CD8-positive, alpha-beta T cell (primary cell): ENCODE measurements at regions of chr1 and their contacts with region 1.

Region 1: GRCh38 chr1:42931108-42931539 is 27.5 kb downstream of the SLC2A1 start:
- DNase-seq: peak in 7 of 9 experiments; percentile 46 to 89 (median 67)
- ATAC-seq: peak; percentile 49
- H3K4me3 ChIP-seq: peak overlapping the region; percentile 22 to 43
- H3K4me3 Mint-ChIP-seq: peak overlapping the region; percentile 70
- H3K27ac ChIP-seq: peak overlapping the region; percentile 63 to 90
- H3K27ac Mint-ChIP-seq: peak overlapping the region; percentile 95
- H3K4me1 ChIP-seq: peaks cover 67% of the 10 kb centered on the region
- H3K4me1 Mint-ChIP-seq: peaks cover 67% of the 10 kb centered on the region
- H3K27me3 ChIP-seq: no peaks in the 10 kb centered on the region
- H3K27me3 Mint-ChIP-seq: no peaks in the 10 kb centered on the region
- CTCF ChIP-seq: peak; percentile 57

Region 2: GRCh38 chr1:42941640-42942330 is 10.7 kb after region 1 on chr1:
- CTCF ChIA-PET with region 1: interaction called, 6 read pairs
- POLR2A ChIA-PET with region 1: interaction called, 15 read pairs
- intact Hi-C with region 1: no loop called
- DNase-seq: no peak
- ATAC-seq: no peak
- H3K4me3 ChIP-seq: no peak overlapping the region
- H3K4me3 Mint-ChIP-seq: no peak overlapping the region
- H3K27ac ChIP-seq: peak overlapping the region in 1 of 2 experiments; percentile 69
- H3K27ac Mint-ChIP-seq: peak overlapping the region; percentile 86
- H3K4me1 ChIP-seq: peaks cover 78% of the 10 kb centered on the region
- H3K4me1 Mint-ChIP-seq: peaks cover 95% of the 10 kb centered on the region
- H3K27me3 ChIP-seq: no peaks in the 10 kb centered on the region
- H3K27me3 Mint-ChIP-seq: no peaks in the 10 kb centered on the region
- CTCF ChIP-seq: no peak

Region 3: GRCh38 chr1:42952303-42953001 is 21.3 kb after region 1 on chr1:
- CTCF ChIA-PET with region 1: interaction called, 10 read pairs
- POLR2A ChIA-PET with region 1: interaction called, 16 read pairs
- intact Hi-C with region 1: no loop called
- DNase-seq: peak in 7 of 9 experiments; percentile 39 to 76 (median 48)
- ATAC-seq: peak; percentile 59
- H3K4me3 ChIP-seq: peak overlapping the region; percentile 21 to 33
- H3K4me3 Mint-ChIP-seq: peak overlapping the region; percentile 50
- H3K27ac ChIP-seq: peak overlapping the region; percentile 30 to 73
- H3K27ac Mint-ChIP-seq: peak overlapping the region; percentile 76
- H3K4me1 ChIP-seq: peaks cover 93% of the 10 kb centered on the region
- H3K4me1 Mint-ChIP-seq: peaks cover 88% of the 10 kb centered on the region
- H3K27me3 ChIP-seq: no peaks in the 10 kb centered on the region
- H3K27me3 Mint-ChIP-seq: no peaks in the 10 kb centered on the region
- CTCF ChIP-seq: no peak